Naive thymus-derived CD4-positive, alpha-beta T cell (primary cell): ENCODE measurements at regions of chr4 and their contacts with region 1.

Region 1: DNA sequence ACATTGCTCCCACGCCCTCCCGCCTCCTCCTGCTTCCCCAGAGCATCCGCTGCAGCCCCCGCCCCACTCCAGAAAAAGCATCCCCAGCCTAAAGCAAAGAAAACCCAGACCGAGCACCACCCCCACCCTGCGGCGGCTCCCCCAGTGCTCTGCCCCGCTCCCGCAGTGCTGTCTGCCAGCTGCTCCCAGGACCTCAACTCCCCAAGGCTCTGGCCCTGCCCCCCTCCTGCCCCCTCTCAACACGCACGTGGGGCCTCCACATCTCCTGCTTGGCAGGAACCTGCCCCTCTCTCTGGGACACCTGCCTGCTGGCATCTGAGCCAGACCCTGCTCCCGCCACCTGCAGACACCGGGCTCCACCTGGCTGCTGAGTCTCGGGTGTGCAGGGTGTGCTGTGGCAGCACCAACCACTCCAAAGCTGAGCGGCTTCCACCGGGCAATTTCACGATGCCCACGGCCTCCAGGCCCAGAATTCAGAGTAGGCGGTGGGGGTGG is 79.4 kb downstream of the FAM53A start:
- DNase-seq: peak in 7 of 9 donors; percentile 55 to 81 (median 70)
- ATAC-seq: peak; percentile 80
- H3K4me3 ChIP-seq: peak overlapping the region; percentile 46
- H3K4me3 Mint-ChIP-seq: peak overlapping the region in 9 of 10 donors; percentile 55 to 84 (median 75)
- H3K27ac ChIP-seq: peak overlapping the region; percentile 45
- H3K27ac Mint-ChIP-seq: peak overlapping the region in 8 of 9 donors; percentile 77 to 97 (median 86)
- H3K4me1 ChIP-seq: peaks cover 10 to 29% of the 10 kb centered on the region in 2 donors
- H3K4me1 Mint-ChIP-seq: peaks cover 0 to 35% (median 13%) of the 10 kb centered on the region in 7 donors
- H3K27me3 ChIP-seq: no peaks in the 10 kb centered on the region
- H3K27me3 Mint-ChIP-seq: no peaks in the 10 kb centered on the region

Region 2: GRCh38 chr4:1547856-1548826 is 56.6 kb before region 1 on chr4:
- CTCF ChIA-PET with region 1: no interaction called
- POLR2A ChIA-PET with region 1: interaction called, 3 read pairs
- intact Hi-C with region 1: loop called in 1 of 2 experiments (anchors 2 kb)
- DNase-seq: no peak
- ATAC-seq: peak; percentile 1
- H3K4me3 ChIP-seq: no peak overlapping the region
- H3K4me3 Mint-ChIP-seq: peak overlapping the region in 9 of 10 donors; percentile 39 to 74 (median 59)
- H3K27ac ChIP-seq: no peak overlapping the region
- H3K27ac Mint-ChIP-seq: peak overlapping the region in 4 of 9 donors; percentile 70 to 81 (median 78)
- H3K4me1 ChIP-seq: peaks cover 0 to 11% of the 10 kb centered on the region in 2 donors
- H3K4me1 Mint-ChIP-seq: peaks cover 3 to 33% (median 21%) of the 10 kb centered on the region in 7 donors
- H3K27me3 ChIP-seq: no peaks in the 10 kb centered on the region
- H3K27me3 Mint-ChIP-seq: peaks cover 0 to 9% (median 3%) of the 10 kb centered on the region in 5 donors

Region 3: DNA sequence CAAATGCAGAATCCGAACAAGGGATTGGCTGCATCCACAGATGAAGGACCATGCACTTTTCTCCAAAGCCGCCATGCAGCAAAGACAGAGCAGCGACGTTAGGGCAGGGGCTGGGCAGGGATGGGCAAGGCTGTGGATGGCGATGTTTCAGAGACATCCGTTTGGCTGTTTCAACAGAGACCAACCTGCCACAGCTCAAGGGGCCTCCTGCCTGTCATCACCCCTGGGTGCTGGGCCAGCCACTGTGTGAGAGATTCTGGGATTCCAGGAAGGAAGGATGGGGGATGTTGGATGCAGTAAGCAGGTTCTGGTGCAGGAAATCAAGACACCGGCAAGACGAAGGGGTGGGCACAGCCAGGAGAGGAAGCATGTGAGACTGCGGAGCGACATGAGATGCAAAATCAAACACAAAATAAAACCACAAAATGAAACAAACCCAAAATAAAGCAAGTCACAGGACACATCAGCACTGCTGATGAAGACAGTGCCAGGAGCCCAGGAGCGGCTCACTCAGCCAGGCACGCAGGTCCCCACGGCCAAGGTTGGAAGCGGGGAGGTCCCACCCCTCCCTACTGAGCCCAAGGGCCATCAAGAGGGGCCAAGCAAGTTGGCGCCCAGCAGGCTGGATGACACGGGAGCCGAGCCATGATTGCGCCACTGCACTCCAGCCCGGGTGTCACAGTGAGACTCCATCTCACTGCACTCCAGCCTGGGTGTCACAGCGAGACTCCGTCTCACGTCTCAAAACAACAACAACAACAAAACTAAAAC is 11.2 kb after region 1 on chr4:
- CTCF ChIA-PET with region 1: interaction called, 6 read pairs
- POLR2A ChIA-PET with region 1: interaction called, 12 read pairs
- intact Hi-C with region 1: loop called in 1 of 2 experiments (anchors 1 kb)
- DNase-seq: peak in 6 of 9 donors; percentile 28 to 56 (median 36)
- ATAC-seq: peak; percentile 39
- H3K4me3 ChIP-seq: no peak overlapping the region
- H3K4me3 Mint-ChIP-seq: peak overlapping the region in 9 of 10 donors; percentile 50 to 82 (median 75)
- H3K27ac ChIP-seq: no peak overlapping the region
- H3K27ac Mint-ChIP-seq: peak overlapping the region in 8 of 9 donors; percentile 57 to 97 (median 92)
- H3K4me1 ChIP-seq: peaks cover 0 to 15% of the 10 kb centered on the region in 2 donors
- H3K4me1 Mint-ChIP-seq: peaks cover 7 to 59% (median 45%) of the 10 kb centered on the region in 7 donors
- H3K27me3 ChIP-seq: no peaks in the 10 kb centered on the region
- H3K27me3 Mint-ChIP-seq: no peaks in the 10 kb centered on the region

Region 4: GRCh38 chr4:1767770-1768366 is 163.1 kb after region 1 on chr4:
- CTCF ChIA-PET with region 1: no interaction called
- POLR2A ChIA-PET with region 1: no interaction called
- intact Hi-C with region 1: no loop called
- DNase-seq: peak in 1 of 9 donors; percentile 50
- ATAC-seq: peak; percentile 39
- H3K4me3 ChIP-seq: no peak overlapping the region
- H3K4me3 Mint-ChIP-seq: peak overlapping the region in 9 of 10 donors; percentile 2 to 82 (median 68)
- H3K27ac ChIP-seq: no peak overlapping the region
- H3K27ac Mint-ChIP-seq: no peak overlapping the region
- H3K4me1 ChIP-seq: no peaks in the 10 kb centered on the region
- H3K4me1 Mint-ChIP-seq: peaks cover 0 to 9% (median 0%) of the 10 kb centered on the region in 7 donors
- H3K27me3 ChIP-seq: no peaks in the 10 kb centered on the region
- H3K27me3 Mint-ChIP-seq: peaks cover 4 to 31% (median 10%) of the 10 kb centered on the region in 5 donors